Pancreas (tissue), 10 donors: ENCODE measurements at regions of chr20 and their contacts with region 1.

Region 1: DNA sequence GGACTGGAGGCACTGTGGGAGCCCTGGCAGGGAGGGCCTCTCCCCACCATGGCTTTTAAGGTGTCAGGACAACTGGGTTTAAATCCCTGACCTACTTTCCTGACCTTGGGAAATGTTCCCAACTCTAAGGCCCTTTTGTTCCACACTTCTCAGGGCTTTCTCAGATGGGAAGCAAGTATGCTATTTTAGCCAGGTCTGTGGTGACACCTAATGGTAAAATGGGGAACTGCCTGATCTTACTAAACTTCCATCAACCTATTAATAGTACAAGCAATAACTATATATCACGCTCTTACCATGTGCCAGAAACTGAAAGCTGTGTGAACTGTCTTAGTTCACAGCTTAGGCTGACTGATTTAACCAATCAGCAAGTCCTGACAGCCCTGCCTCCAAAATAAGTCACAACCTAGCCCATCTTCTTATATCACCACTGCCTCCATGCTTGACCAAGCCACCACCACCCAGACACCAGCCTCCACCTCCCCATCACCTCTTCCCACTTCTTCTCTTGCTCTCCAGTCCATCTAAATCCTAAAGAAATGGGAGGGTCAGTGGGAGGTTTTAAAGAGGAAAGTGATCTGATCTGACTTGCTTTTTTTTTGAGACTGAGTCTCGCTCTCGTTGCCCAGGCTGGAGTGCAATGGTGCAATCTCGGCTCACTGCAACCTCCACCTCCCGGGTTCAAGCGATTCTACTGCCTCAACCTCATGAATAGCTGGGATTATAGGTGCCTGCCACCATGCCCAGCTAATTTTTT is 6.9 kb upstream of the BLCAP start:
- DNase-seq: peak in 3 of 6 donors; percentile 36 to 73 (median 43)
- ATAC-seq: peak; percentile 84 to 99 (median 97)
- H3K4me3 ChIP-seq: no peak overlapping the region
- H3K27ac ChIP-seq: no peak overlapping the region
- H3K4me1 ChIP-seq: no peaks in the 10 kb centered on the region
- H3K27me3 ChIP-seq: no peaks in the 10 kb centered on the region
- CTCF ChIP-seq: peak; percentile 64 to 74 (median 66)

Region 2: DNA sequence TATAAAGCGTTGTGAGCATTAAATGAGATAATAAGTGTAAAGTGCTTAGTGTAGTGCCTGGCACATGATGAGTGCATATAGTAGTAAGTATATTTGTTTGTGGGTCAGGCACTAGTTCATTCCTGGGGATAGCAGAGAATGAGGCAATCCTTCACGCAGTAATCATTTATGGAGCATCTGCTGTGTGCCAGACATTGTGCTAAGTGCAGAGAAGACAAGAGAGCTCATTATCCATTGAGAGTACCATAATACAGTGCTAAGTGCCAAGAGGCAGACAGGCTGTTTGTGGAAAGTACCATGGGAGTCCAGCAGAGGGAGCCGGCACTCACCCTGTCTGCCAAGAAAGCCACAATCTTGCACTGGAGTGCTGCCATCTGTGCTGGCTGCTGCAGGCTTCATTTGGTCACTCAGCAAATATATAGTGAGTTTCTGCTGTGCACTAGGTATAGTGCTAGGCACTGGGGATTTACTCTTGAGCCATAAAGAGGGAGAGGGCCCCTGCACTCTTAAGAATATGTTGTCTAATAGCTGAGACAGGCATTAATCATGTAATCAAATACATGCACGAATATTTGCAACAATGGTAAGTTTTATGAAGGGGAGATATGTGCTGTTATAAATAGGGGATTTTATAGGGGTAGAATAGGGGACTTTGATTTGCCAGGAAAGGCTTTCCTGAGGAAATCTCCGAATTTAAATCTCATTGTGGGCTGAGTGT is 342.3 kb before region 1 on chr20:
- intact Hi-C with region 1: loop called in 2 of 3 experiments (anchors 5 kb)
- DNase-seq: peak; percentile 85 to 95 (median 90)
- ATAC-seq: peak; percentile 88 to 96 (median 94)
- H3K4me3 ChIP-seq: no peak overlapping the region
- H3K27ac ChIP-seq: no peak overlapping the region
- H3K4me1 ChIP-seq: peaks cover 13 to 22% (median 15%) of the 10 kb centered on the region in 3 donors
- H3K27me3 ChIP-seq: no peaks in the 10 kb centered on the region
- CTCF ChIP-seq: peak; percentile 85 to 95 (median 88)

Region 3: GRCh38 chr20:37265152-37265551 is 269.4 kb before region 1 on chr20:
- intact Hi-C with region 1: loop called (anchors 5 to 10 kb)
- DNase-seq: no peak
- ATAC-seq: no peak
- H3K4me3 ChIP-seq: no peak overlapping the region
- H3K27ac ChIP-seq: no peak overlapping the region
- H3K4me1 ChIP-seq: no peaks in the 10 kb centered on the region
- H3K27me3 ChIP-seq: no peaks in the 10 kb centered on the region
- CTCF ChIP-seq: no peak

Region 4: DNA sequence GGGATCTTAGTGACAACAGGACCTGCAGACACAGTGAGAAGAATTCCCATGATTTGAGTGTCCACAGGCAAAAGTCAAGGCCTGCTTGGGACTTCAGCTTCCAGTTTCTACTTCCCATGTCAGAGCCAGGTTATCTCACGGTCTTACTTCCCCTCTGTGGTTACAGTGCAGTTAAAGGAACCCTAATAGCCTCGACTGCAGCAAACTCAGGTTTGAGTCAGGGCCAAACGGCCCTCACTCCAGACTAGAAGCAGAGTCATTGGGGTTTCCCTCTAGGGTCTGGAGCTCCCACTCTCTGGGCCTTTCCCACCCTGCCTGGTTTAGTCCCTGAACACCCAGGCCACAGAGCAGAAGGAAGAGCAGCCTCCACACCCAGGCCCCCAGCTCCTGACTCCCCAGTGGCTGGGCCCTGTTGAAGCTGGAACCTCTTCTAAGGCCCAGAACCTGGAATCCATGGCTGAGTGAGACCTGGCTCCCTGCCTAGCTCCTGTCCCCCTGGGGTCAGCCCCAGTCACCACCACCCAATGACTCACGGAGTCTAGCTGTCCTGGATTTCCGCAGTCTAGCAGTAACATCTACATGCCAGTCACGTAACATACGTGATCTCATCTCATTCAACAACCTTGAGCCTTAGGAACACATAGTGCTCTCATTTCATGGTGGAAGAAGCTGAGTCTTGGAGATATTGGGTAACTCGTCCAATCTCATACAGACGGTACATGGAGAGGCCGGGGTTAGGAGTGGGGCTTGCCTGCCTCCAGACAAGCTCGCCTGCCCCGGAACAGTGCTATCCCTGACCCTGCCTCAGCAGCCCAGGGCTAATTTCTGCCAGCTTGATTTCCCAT is 263.8 kb before region 1 on chr20:
- intact Hi-C with region 1: loop called (anchors 5 to 10 kb)
- DNase-seq: no peak
- ATAC-seq: peak in 2 of 4 donors; percentile 49 to 57
- H3K4me3 ChIP-seq: no peak overlapping the region
- H3K27ac ChIP-seq: peak overlapping the region in 2 of 4 donors; percentile 22 to 41
- H3K4me1 ChIP-seq: no peaks in the 10 kb centered on the region
- H3K27me3 ChIP-seq: no peaks in the 10 kb centered on the region
- CTCF ChIP-seq: no peak

Region 5: DNA sequence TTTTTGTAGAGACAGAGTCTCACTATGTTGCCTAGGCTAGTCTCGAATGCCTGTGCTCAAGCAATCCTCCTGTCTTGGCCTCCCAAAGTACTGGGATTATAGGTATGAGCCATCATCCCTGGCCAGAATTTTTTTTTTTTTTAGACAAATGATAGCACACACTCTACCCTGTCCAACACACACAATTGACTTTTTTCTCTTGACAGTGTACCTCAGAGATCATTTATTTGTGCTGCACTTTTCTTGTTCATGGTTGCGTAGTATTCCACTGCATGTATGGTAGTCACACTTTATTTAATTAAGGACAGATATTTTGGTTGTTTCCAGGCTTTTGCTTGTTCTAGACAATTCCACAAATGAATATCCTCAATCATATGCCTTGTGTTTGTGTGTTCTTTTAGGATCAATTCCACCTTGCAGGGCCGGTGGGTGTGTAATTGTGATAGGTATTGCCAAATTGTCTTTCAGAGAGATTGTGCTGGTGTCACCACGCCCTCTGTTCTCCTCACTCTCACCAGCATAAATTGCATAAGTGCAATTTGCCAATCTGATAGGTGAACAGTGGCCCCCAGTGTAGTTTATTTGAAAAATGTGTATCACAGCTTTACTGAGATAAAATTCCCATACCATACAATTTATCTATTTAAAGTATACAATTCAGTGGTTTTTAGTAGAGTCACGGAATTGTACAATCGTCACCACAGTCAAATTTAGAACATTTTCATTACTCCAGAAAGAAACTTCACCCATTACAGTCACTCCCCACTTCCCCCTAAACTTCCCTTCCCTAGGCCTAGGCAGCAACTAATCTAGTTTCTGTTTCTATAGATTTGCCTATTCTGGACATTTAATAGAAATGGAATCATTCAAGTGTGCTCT is 168.6 kb before region 1 on chr20:
- intact Hi-C with region 1: no loop called
- DNase-seq: no peak
- ATAC-seq: peak in 1 of 4 donors; percentile 63
- H3K4me3 ChIP-seq: no peak overlapping the region
- H3K27ac ChIP-seq: no peak overlapping the region
- H3K4me1 ChIP-seq: no peaks in the 10 kb centered on the region
- H3K27me3 ChIP-seq: no peaks in the 10 kb centered on the region
- CTCF ChIP-seq: no peak

Region 6: GRCh38 chr20:37990571-37991151 is 456.1 kb after region 1 on chr20:
- intact Hi-C with region 1: no loop called
- DNase-seq: no peak
- ATAC-seq: peak in 3 of 4 donors; percentile 35 to 43 (median 38)
- H3K4me3 ChIP-seq: no peak overlapping the region
- H3K27ac ChIP-seq: peak overlapping the region in 2 of 4 donors; percentile 16 to 24
- H3K4me1 ChIP-seq: peaks cover 0 to 23% (median 11%) of the 10 kb centered on the region in 3 donors
- H3K27me3 ChIP-seq: no peaks in the 10 kb centered on the region
- CTCF ChIP-seq: no peak